ENCODE measurements at regions of chr1 and their contacts with region 1.

Region 1: DNA sequence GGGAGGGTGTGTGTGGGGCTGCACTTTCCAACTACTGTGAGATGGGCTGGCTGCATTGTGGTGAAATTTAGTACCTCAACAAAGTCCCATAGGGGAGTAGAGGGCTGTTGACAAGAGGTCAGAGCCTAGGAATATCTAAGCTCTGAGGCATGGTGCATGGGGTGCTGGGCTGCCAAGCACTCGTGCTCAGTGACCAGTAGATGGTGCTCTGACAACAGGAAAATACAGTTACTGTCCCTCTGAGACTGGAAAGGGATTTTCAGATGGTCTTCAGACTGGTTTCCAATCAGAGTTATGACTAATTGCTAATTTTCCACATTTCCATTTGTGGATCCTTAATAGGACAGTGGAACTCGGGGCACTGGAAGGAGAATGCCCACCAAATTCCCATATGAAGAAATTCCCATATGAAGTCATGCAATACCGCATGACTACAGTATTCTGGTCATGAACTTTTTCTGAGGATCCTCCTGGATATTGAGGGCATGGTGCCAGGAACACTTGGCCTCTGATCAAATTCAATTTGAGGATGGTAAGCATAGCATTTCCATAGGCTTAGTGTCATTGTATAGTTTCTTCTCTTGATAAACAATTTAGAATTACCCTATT is 4.1 kb upstream of the CACNA1E start:
- DNase-seq: peak; percentile 47
- H3K4me3 ChIP-seq: no peak overlapping the region
- H3K27ac ChIP-seq: no peak overlapping the region
- H3K4me1 ChIP-seq: no peaks in the 10 kb centered on the region
- H3K27me3 ChIP-seq: peaks cover 17% of the 10 kb centered on the region
- CTCF ChIP-seq: peak; percentile 90 to 95

Region 2: DNA sequence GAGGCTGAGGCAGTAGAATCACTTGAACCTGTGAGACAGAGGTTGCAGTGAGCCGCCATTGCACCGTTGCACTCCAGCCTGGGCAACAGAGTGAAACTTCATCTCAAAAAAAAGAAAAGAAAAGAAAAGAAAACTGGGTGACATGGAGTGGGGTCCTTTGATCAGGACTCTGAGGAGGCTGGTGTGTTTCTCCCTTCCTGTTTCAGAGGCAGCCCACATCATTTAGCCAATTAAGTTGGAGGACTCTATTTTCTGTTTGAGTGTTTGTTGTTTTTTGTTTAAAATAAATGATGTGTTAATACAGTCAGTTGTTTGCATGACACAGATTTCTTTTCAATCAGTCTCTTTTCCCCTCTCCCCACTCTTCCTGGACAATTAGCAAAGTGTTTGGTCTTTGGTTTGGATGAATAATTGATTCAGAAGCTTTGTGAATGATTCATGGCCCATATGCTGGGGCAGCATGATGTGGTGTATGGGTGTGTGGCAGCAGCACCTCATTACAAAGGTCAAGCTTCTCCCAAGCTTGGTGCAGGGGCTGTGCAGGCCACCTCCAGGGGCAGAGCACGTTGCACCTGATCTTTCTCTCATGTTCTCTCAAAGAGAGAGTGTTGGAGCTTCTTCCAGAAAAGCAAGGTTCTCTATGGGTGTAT is 52.8 kb after region 1 on chr1:
- CTCF ChIA-PET with region 1: no interaction called
- dilution Hi-C with region 1: loop called (anchors 5 kb)
- in situ Hi-C with region 1: no loop called
- intact Hi-C with region 1: no loop called
- DNase-seq: no peak
- H3K4me3 ChIP-seq: no peak overlapping the region
- H3K27ac ChIP-seq: no peak overlapping the region
- H3K4me1 ChIP-seq: no peaks in the 10 kb centered on the region
- H3K27me3 ChIP-seq: no peaks in the 10 kb centered on the region
- CTCF ChIP-seq: no peak

Region 3: DNA sequence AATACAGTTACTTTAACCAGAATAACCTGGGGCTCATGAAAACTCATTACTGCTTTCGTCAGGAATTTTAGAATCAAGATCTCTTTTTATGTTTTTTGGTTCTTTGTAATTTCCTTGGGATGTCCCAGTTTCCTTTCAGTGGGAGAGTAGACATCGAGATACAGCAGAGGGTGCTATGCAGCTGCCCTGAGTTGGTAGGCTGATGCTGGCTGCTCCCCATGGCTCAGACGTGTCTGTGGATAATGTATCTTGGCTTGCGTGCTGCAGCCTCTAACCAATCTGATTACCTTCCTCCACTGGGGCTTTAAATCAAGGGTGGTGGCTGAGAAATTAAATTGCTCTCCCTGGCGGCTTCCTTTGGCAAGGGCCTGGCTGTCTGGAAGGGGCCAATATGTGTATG is 257.8 kb after region 1 on chr1:
- CTCF ChIA-PET with region 1: no interaction called
- dilution Hi-C with region 1: no loop called
- in situ Hi-C with region 1: no loop called
- intact Hi-C with region 1: loop called (anchors 2 kb)
- DNase-seq: peak; percentile 19
- H3K4me3 ChIP-seq: no peak overlapping the region
- H3K27ac ChIP-seq: no peak overlapping the region
- H3K4me1 ChIP-seq: no peaks in the 10 kb centered on the region
- H3K27me3 ChIP-seq: no peaks in the 10 kb centered on the region
- CTCF ChIP-seq: peak in 1 of 2 donors; percentile 64

Region 4: GRCh38 chr1:181936768-181937581 is 457.7 kb after region 1 on chr1:
- CTCF ChIA-PET with region 1: interaction called, 8 read pairs
- dilution Hi-C with region 1: no loop called
- in situ Hi-C with region 1: loop called in 1 of 2 experiments (anchors 10 kb)
- intact Hi-C with region 1: loop called (anchors 1 kb)
- DNase-seq: peak; percentile 63
- H3K4me3 ChIP-seq: no peak overlapping the region
- H3K27ac ChIP-seq: no peak overlapping the region
- H3K4me1 ChIP-seq: no peaks in the 10 kb centered on the region
- H3K27me3 ChIP-seq: peaks cover 2% of the 10 kb centered on the region
- CTCF ChIP-seq: peak; percentile 78 to 84

Region 5: DNA sequence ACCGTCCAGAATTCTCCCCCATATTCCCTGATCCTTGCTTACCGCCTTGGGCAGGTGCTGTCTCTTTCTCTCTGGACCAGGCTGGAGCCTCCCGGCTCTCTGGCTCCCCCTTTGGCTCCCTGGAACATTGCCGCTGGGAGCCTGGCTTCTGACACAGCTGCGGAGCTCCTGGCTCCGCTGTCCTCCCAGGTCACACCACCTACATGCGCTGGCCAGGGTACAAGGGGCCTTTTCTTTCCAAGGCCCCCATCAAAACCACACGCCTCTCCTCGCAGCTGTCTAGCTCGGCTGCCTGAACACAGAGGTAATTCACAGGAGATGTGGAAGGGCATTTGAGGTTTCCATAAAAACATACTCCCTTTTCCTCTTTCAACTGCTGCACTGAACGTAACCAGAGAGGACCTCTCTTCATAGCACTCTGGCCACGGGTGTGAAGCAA is 589.8 kb after region 1 on chr1:
- CTCF ChIA-PET with region 1: no interaction called
- dilution Hi-C with region 1: no loop called
- in situ Hi-C with region 1: loop called (anchors 25 kb)
- intact Hi-C with region 1: no loop called
- DNase-seq: peak; percentile 56
- H3K4me3 ChIP-seq: no peak overlapping the region
- H3K27ac ChIP-seq: no peak overlapping the region
- H3K4me1 ChIP-seq: no peaks in the 10 kb centered on the region
- H3K27me3 ChIP-seq: peaks cover 2% of the 10 kb centered on the region
- CTCF ChIP-seq: peak; percentile 90 to 96

Measured in mammary epithelial cell (primary cell).